Dorsolateral prefrontal cortex (tissue), 120 donors: ENCODE measurements at regions of chr9 and their contacts with region 1.

Region 1: GRCh38 chr9:19230356-19231125 is at the start of gene DENND4C:
- DNase-seq: peak; percentile 65 to 90 (median 79)
- H3K4me3 ChIP-seq: peak within 1 kb of the TSS; percentile 58 to 100 (median 98)
- H3K27ac ChIP-seq: peak within 1 kb of the TSS; percentile 83 to 100 (median 97)
- H3K27me3 ChIP-seq: no peaks in the 10 kb centered on the region
- CTCF ChIP-seq: peak in 35 of 56 donors; percentile 5 to 66 (median 34)
- total RNA-seq, gene DENND4C: 25.3 to 66.1 (median 39.0) TPM

Region 2: DNA sequence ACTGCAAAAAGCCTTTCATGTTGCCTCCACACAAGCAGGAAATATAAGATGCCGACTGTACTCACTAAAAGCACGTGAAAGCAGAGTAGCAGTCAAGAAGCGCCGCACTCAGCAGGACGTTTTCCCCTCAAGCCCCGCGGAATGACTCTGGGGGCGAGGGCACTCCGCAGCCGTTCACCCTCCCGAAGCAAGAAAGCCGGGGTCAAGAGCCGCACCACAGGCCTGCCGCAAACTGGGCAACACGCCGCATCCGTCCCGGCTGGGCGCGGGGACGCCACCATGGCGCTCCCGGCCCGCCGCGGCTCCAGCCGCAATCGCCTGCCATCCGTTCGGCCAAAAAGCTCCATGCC is 149.1 kb after region 1 on chr9:
- intact Hi-C with region 1: loop called (anchors 2 to 5 kb)
- DNase-seq: peak in 3 of 10 donors; percentile 25 to 53 (median 32)
- H3K4me3 ChIP-seq: peak overlapping the region; percentile 58 to 95 (median 85)
- H3K27ac ChIP-seq: peak overlapping the region; percentile 60 to 98 (median 93)
- H3K27me3 ChIP-seq: no peaks in the 10 kb centered on the region
- CTCF ChIP-seq: no peak